Activated CD4-positive, alpha-beta T cell treated with anti-CD3 and anti-CD28 coated beads for 36 hours (primary cell): ENCODE measurements at regions of chr13 and their contacts with region 1.

Region 1: GRCh38 chr13:36706755-36707154 is 32.9 kb downstream of the SERTM1 start:
- DNase-seq: no peak
- ATAC-seq: no peak
- H3K4me3 Mint-ChIP-seq: no peak overlapping the region
- H3K27ac Mint-ChIP-seq: no peak overlapping the region
- H3K4me1 Mint-ChIP-seq: no peaks in the 10 kb centered on the region
- H3K27me3 Mint-ChIP-seq: peaks cover 7% of the 10 kb centered on the region

Region 2: DNA sequence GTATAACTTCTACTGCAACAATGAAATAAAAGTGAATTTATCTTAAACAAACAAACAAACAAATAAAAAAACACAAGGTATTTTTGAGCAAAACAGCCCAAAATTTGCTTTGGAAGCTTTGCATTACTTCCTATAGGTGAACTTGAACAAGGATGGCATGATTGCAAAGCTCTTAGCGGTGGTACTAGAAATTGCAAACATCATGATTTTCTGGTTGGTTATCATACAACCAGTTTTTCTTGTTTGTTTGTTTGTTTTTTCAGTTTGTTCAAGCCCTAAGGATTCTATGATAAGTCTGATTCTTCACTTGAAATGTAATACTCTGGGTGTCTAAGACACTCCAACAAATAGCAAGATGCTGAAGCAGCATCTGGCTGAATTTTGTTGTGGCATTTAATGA is 591.5 kb before region 1 on chr13:
- CTCF ChIA-PET with region 1: no interaction called
- POLR2A ChIA-PET with region 1: interaction called, 10 read pairs
- intact Hi-C with region 1: no loop called
- DNase-seq: no peak
- ATAC-seq: no peak
- H3K4me3 Mint-ChIP-seq: no peak overlapping the region
- H3K27ac Mint-ChIP-seq: no peak overlapping the region
- H3K4me1 Mint-ChIP-seq: no peaks in the 10 kb centered on the region
- H3K27me3 Mint-ChIP-seq: no peaks in the 10 kb centered on the region

Region 3: GRCh38 chr13:36986462-36987240 is 279.9 kb after region 1 on chr13:
- CTCF ChIA-PET with region 1: no interaction called
- POLR2A ChIA-PET with region 1: no interaction called
- intact Hi-C with region 1: no loop called
- DNase-seq: no peak
- ATAC-seq: no peak
- H3K4me3 Mint-ChIP-seq: no peak overlapping the region
- H3K27ac Mint-ChIP-seq: peak overlapping the region; percentile 4
- H3K4me1 Mint-ChIP-seq: no peaks in the 10 kb centered on the region
- H3K27me3 Mint-ChIP-seq: no peaks in the 10 kb centered on the region

Region 4: GRCh38 chr13:37163641-37164265 is 457.0 kb after region 1 on chr13:
- CTCF ChIA-PET with region 1: no interaction called
- POLR2A ChIA-PET with region 1: no interaction called
- intact Hi-C with region 1: no loop called
- DNase-seq: no peak
- ATAC-seq: no peak
- H3K4me3 Mint-ChIP-seq: no peak overlapping the region
- H3K27ac Mint-ChIP-seq: no peak overlapping the region
- H3K4me1 Mint-ChIP-seq: no peaks in the 10 kb centered on the region
- H3K27me3 Mint-ChIP-seq: no peaks in the 10 kb centered on the region